ENCODE measurements at regions of chr15 and their contacts with region 1.

Region 1: GRCh38 chr15:44593042-44593736 is 56.2 kb downstream of the EIF3J start:
- DNase-seq: peak in 2 of 3 donors; percentile 8 to 14
- H3K4me3 ChIP-seq: no peak overlapping the region
- H3K4me3 Mint-ChIP-seq: no peak overlapping the region
- H3K27ac ChIP-seq: no peak overlapping the region
- H3K27ac Mint-ChIP-seq: peak overlapping the region in 2 of 7 donors; percentile 2 to 46
- H3K4me1 ChIP-seq: no peaks in the 10 kb centered on the region
- H3K4me1 Mint-ChIP-seq: no peaks in the 10 kb centered on the region
- H3K27me3 ChIP-seq: no peaks in the 10 kb centered on the region
- H3K27me3 Mint-ChIP-seq: peaks cover 0 to 2% (median 0%) of the 10 kb centered on the region in 3 donors
- CTCF ChIP-seq: peak; percentile 53

Region 2: GRCh38 chr15:44366971-44367370 is 226.2 kb before region 1 on chr15:
- intact Hi-C with region 1: no loop called
- DNase-seq: no peak
- H3K4me3 ChIP-seq: no peak overlapping the region
- H3K4me3 Mint-ChIP-seq: no peak overlapping the region
- H3K27ac ChIP-seq: no peak overlapping the region
- H3K27ac Mint-ChIP-seq: no peak overlapping the region
- H3K4me1 ChIP-seq: no peaks in the 10 kb centered on the region
- H3K4me1 Mint-ChIP-seq: no peaks in the 10 kb centered on the region
- H3K27me3 ChIP-seq: no peaks in the 10 kb centered on the region
- H3K27me3 Mint-ChIP-seq: no peaks in the 10 kb centered on the region
- CTCF ChIP-seq: no peak

Region 3: DNA sequence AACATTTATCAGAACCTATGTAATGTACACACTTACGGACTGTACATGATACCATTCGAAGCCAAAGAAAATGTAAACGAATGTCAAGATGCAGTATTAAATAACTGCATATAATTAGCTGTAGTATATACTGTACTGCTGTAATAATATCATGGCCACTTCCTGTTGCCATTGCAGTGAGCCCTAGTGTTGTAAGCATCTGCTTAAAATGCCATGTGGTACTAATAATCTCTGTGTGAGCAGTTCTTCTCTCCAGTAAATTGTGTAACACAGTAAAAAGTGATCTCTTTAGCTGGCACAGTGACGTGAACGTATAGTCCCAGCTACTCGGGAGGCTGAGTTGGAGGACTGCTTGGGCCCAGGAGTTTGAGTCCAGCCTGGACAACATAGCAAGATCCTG is 61.7 kb after region 1 on chr15:
- intact Hi-C with region 1: loop called in 1 of 2 experiments (anchors 10 kb)
- DNase-seq: peak in 1 of 3 donors; percentile 12
- H3K4me3 ChIP-seq: no peak overlapping the region
- H3K4me3 Mint-ChIP-seq: no peak overlapping the region
- H3K27ac ChIP-seq: peak overlapping the region in 1 of 2 donors; percentile 44
- H3K27ac Mint-ChIP-seq: peak overlapping the region in 4 of 7 donors; percentile 20 to 79 (median 52)
- H3K4me1 ChIP-seq: peaks cover 0 to 3% of the 10 kb centered on the region in 2 donors
- H3K4me1 Mint-ChIP-seq: peaks cover 10% of the 10 kb centered on the region
- H3K27me3 ChIP-seq: no peaks in the 10 kb centered on the region
- H3K27me3 Mint-ChIP-seq: peaks cover 0 to 1% (median 0%) of the 10 kb centered on the region in 3 donors
- CTCF ChIP-seq: no peak

Measured in CD14-positive monocyte (primary cell).